Mammary epithelial cell (primary cell): ENCODE measurements at regions of chr21 and their contacts with region 1.

Region 1: GRCh38 chr21:35840197-35840799 is 220.0 kb downstream of the SETD4 start:
- DNase-seq: peak; percentile 59
- H3K4me3 ChIP-seq: no peak overlapping the region
- H3K27ac ChIP-seq: no peak overlapping the region
- H3K4me1 ChIP-seq: peaks cover 2% of the 10 kb centered on the region
- H3K27me3 ChIP-seq: no peaks in the 10 kb centered on the region
- CTCF ChIP-seq: peak; percentile 85 to 92

Region 2: DNA sequence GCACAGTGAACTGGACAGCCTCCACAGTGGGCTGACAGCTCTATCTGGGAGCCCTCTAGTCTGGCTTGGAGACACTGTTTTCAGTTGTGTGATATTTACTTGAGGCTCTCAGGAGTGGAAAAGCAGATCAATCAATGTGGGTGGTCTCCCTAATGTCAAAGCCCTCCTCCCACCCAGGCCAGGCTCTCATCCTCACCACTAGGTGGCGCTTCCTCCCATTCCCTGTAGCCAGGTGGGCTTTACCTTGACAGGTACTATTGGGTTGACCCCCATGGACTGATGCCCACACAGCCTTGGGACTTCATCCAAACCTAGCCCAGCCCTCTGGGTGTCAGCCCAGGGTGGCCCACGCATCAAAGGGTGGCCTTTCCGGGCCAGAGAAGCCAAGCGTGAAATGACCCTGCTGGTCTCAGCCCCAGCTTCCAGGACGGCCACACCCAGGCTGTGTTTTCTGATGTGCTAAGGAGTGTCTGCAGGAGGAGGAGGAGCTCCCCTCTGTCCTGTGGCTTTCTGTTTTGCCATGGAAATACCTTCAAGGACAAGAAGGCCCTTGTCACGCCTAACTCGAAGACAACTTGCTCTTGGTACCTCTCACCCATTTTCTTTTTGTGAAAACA is 1117.5 kb before region 1 on chr21:
- CTCF ChIA-PET with region 1: no interaction called
- dilution Hi-C with region 1: no loop called
- in situ Hi-C with region 1: loop called in 1 of 2 experiments (anchors 25 kb)
- intact Hi-C with region 1: no loop called
- DNase-seq: no peak
- H3K4me3 ChIP-seq: no peak overlapping the region
- H3K27ac ChIP-seq: no peak overlapping the region
- H3K4me1 ChIP-seq: no peaks in the 10 kb centered on the region
- H3K27me3 ChIP-seq: no peaks in the 10 kb centered on the region
- CTCF ChIP-seq: peak; percentile 59 to 80

Region 3: GRCh38 chr21:35048706-35049617 is 791.3 kb before region 1 on chr21 and contains the start of gene RUNX1:
- CTCF ChIA-PET with region 1: no interaction called
- dilution Hi-C with region 1: no loop called
- in situ Hi-C with region 1: no loop called
- intact Hi-C with region 1: loop called (anchors 2 kb)
- DNase-seq: peak; percentile 91
- H3K4me3 ChIP-seq: peak within 1 kb of the TSS; percentile 13 to 35 (median 34)
- H3K27ac ChIP-seq: peak within 1 kb of the TSS; percentile 90
- H3K4me1 ChIP-seq: peaks cover 32% of the 10 kb centered on the region
- H3K27me3 ChIP-seq: no peaks in the 10 kb centered on the region
- CTCF ChIP-seq: no peak
- total RNA-seq, gene RUNX1: 126 to 133 TPM

Region 4: DNA sequence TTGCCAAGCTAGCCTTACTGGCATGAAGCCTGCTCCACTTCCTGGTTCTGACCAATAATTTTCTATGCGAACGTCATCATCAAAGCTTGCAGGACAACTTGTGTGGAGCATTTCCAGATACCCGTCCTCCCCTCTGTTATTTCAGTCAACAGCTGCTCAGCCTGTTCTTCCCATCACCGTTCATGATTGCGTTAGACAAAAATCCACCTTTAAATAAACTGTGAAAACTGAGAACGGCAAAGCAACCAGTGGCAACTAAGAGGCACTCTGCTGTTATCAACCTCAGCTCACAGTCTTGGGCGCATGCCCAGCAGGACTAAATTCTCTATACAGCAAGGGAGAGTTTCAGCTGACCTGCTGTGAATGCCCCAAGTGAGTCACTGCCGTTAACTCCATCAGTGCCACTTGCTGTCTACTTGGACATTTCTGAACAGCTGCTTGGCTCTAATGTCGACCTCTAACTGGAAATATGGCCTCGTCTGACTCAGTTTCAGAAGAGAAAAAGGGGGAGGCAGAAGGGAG is 583.8 kb before region 1 on chr21:
- CTCF ChIA-PET with region 1: no interaction called
- dilution Hi-C with region 1: no loop called
- in situ Hi-C with region 1: loop called in 1 of 2 experiments (anchors 25 kb)
- intact Hi-C with region 1: no loop called
- DNase-seq: peak; percentile 99
- H3K4me3 ChIP-seq: peak overlapping the region; percentile 3 to 31 (median 7)
- H3K27ac ChIP-seq: peak overlapping the region; percentile 98
- H3K4me1 ChIP-seq: peaks cover 17% of the 10 kb centered on the region
- H3K27me3 ChIP-seq: no peaks in the 10 kb centered on the region
- CTCF ChIP-seq: peak in 1 of 2 donors; percentile 16

Region 5: DNA sequence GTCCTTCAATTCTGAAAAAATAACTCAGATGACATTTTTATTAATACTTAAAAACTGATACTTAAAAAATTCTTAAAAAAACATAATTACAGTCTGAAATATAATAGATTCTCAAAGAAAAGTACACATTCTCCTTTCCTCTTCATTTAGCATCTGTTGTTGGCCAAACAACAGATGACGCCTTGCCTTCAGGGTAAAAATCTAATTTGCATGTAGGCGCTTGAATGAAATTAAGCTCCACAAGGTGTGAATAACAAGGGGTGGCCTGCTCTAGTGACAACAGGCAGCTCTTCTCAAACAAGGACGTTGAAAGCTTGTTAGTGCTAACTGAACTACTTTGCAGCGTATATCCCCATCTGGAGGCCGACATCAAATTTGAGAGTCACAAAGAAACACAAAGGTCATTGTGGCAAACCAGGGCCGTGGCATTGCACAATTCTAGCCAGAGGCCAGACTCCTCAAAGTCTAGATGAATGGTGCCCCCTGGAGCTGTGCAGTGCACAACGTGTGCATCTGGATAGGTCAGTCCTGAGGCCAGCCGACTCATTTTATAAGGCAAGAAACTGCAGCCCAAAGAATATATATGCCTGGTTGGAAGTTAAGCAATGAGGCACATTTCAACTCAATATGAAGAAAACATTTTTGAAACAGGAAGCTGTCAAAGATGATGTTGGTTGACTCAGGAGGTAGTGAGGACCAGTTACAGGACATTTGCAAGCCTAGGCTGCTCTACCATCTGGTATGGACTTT is 332.0 kb before region 1 on chr21:
- CTCF ChIA-PET with region 1: no interaction called
- dilution Hi-C with region 1: no loop called
- in situ Hi-C with region 1: no loop called
- intact Hi-C with region 1: no loop called
- DNase-seq: peak; percentile 56
- H3K4me3 ChIP-seq: no peak overlapping the region
- H3K27ac ChIP-seq: no peak overlapping the region
- H3K4me1 ChIP-seq: peaks cover 22% of the 10 kb centered on the region
- H3K27me3 ChIP-seq: no peaks in the 10 kb centered on the region
- CTCF ChIP-seq: peak in 1 of 2 donors; percentile 6

Region 6: DNA sequence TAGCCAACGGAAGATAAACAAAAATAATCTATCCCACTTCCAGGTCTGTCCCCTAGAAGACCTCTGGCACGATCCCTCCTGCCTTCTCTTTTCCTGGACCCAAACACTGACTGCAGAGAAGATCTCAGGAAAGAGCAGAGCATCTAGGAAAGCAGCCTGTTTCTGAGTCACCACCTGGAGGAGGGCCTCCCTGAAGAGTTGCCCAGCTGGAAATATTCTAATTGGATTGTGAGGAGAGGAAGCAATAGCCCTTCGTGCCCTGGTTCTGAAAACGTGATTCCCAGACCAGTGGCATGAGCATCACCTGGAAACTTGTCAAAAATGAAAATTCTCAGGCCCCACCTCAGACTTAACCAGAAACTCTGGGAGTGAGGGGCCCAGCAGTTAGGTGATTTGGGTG is 191.1 kb before region 1 on chr21:
- CTCF ChIA-PET with region 1: no interaction called
- dilution Hi-C with region 1: no loop called
- in situ Hi-C with region 1: no loop called
- intact Hi-C with region 1: loop called (anchors 5 kb)
- DNase-seq: peak; percentile 36
- H3K4me3 ChIP-seq: no peak overlapping the region
- H3K27ac ChIP-seq: no peak overlapping the region
- H3K4me1 ChIP-seq: peaks cover 8% of the 10 kb centered on the region
- H3K27me3 ChIP-seq: no peaks in the 10 kb centered on the region
- CTCF ChIP-seq: no peak

Region 7: DNA sequence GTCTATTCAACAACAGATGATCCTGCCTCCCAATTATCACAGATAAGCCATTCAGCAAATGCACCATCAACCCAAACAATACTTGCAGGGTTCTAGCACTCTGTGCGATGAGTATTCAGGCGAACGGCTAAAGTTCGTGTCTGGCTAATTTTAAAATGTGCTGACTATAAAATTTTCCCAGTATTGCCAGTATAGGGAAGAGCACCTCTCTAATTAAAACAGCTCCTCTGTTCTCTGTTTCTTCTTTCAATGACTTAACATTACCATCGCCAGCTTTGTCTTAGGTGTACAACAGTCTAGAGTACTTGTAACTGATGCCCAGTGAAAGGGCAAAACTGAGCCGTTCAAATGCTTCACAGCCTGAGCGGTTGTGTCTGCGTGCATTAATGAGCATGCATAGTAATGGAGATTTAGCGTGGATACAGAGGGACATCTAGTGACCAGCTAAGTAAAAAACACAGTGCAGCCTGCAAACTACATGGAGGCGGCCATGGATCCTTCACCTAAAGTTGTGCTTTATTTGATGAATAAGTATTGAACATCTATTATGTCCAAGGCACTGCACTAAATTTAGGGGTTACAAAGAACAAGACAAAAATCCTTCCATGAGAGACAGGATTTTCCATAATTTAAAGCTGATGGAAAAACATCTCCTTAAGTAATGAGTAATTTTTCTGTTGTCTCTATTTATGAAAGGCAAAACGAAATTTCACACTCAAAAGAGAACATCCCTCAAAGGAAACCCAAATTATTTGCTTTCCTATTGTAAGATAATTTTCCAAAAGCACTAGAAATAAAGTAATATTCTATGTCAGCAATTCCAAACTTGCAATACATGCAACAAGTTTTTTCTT is 100.0 kb after region 1 on chr21:
- CTCF ChIA-PET with region 1: no interaction called
- dilution Hi-C with region 1: no loop called
- in situ Hi-C with region 1: no loop called
- intact Hi-C with region 1: loop called (anchors 2 kb)
- DNase-seq: peak; percentile 66
- H3K4me3 ChIP-seq: no peak overlapping the region
- H3K27ac ChIP-seq: no peak overlapping the region
- H3K4me1 ChIP-seq: no peaks in the 10 kb centered on the region
- H3K27me3 ChIP-seq: no peaks in the 10 kb centered on the region
- CTCF ChIP-seq: peak; percentile 77

Region 8: GRCh38 chr21:36113647-36114428 is 273.5 kb after region 1 on chr21:
- CTCF ChIA-PET with region 1: no interaction called
- dilution Hi-C with region 1: no loop called
- in situ Hi-C with region 1: no loop called
- intact Hi-C with region 1: loop called (anchors 10 kb)
- DNase-seq: no peak
- H3K4me3 ChIP-seq: no peak overlapping the region
- H3K27ac ChIP-seq: no peak overlapping the region
- H3K4me1 ChIP-seq: no peaks in the 10 kb centered on the region
- H3K27me3 ChIP-seq: no peaks in the 10 kb centered on the region
- CTCF ChIP-seq: no peak